Heart left ventricle (tissue), 16 donors: ENCODE measurements at regions of chr18 and their contacts with region 1.

Region 1: DNA sequence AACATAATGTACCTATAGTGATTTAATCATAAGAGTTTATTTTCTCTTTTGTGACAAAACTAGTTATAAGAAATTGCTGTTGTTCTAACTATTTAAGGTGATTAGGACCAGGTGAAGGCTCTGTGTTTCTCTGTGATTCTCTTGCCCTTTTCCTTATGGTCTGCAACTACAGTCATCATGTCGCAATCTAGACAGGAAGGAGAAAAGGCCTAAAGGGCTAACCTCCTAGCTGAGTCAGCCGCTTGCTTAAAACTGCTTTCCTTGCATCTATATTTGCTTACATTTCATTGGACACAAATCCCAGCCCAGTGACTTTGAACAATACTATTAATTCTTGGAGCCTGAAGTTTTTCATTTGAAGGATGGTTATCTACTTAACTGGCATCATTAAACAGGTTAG is 93.1 kb downstream of the PIK3C3 start:
- DNase-seq: no peak
- ATAC-seq: no peak
- H3K4me3 ChIP-seq: no peak overlapping the region
- H3K27ac ChIP-seq: no peak overlapping the region
- H3K4me1 ChIP-seq: peaks cover 0 to 6% (median 0%) of the 10 kb centered on the region in 12 donors
- H3K27me3 ChIP-seq: no peaks in the 10 kb centered on the region
- CTCF ChIP-seq: no peak
- POLR2A ChIP-seq: no peak

Region 2: GRCh38 chr18:41745166-41746049 is 302.7 kb before region 1 on chr18:
- intact Hi-C with region 1: no loop called
- DNase-seq: peak; percentile 11 to 60 (median 25)
- ATAC-seq: peak; percentile 53 to 75 (median 65)
- H3K4me3 ChIP-seq: no peak overlapping the region
- H3K27ac ChIP-seq: no peak overlapping the region
- H3K4me1 ChIP-seq: no peaks in the 10 kb centered on the region
- H3K27me3 ChIP-seq: no peaks in the 10 kb centered on the region
- CTCF ChIP-seq: peak; percentile 25 to 66 (median 56)
- POLR2A ChIP-seq: no peak

Region 3: GRCh38 chr18:41967680-41968079 is 80.5 kb before region 1 on chr18:
- intact Hi-C with region 1: loop called in 1 of 10 experiments (anchors 10 kb)
- DNase-seq: peak in 1 of 5 donors; percentile 33
- ATAC-seq: peak in 3 of 4 donors; percentile 20 to 57 (median 50)
- H3K4me3 ChIP-seq: no peak overlapping the region
- H3K27ac ChIP-seq: no peak overlapping the region
- H3K4me1 ChIP-seq: peaks cover 0 to 41% (median 22%) of the 10 kb centered on the region in 12 donors
- H3K27me3 ChIP-seq: no peaks in the 10 kb centered on the region
- CTCF ChIP-seq: no peak
- POLR2A ChIP-seq: no peak